ENCODE measurements at regions of chr11 and their contacts with region 1.

Region 1: DNA sequence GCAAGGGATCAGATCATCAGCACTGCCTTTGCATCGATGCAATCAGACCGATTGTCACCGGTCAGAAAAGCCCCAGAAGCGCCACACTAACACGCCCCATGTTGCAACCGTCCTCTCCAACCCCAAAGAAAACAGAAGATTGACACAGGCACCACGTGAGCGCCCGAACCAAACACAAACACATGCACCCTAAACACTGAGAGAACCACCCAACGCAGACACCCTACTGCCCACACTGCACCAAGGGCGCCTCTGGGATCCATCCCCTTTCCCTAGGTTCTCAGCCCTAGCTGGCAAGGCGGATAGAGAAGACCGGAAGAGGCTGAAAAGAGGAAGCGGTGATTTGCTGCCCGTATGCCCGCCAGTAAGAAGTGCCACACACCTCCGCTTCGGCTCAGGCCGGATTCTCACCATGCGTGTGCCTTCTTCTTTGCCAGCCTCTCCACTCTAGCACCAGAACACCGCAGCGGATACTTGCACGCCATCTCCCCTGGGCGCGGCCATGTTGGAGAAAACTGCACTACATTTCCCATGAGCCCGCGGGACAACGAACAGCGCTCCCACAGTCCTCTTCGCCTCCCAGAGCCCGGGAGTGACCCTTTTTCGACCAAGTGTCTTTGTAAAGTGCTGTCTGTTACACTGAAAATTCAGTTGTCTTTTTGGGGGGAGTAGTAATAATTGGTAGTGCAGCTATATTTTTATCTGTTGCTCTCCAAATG is at the start of gene ALKBH8:
- DNase-seq: peak; percentile 55 to 82 (median 70)
- ATAC-seq: peak; percentile 97 to 99 (median 98)
- H3K4me3 ChIP-seq: peak within 1 kb of the TSS; percentile 61 to 86 (median 76)
- H3K27ac ChIP-seq: peak within 1 kb of the TSS; percentile 8 to 79 (median 46)
- H3K4me1 ChIP-seq: no peaks in the 10 kb centered on the region
- H3K27me3 ChIP-seq: no peaks in the 10 kb centered on the region
- CTCF ChIP-seq: no peak
- total RNA-seq, gene ALKBH8: 2.2 to 3.9 (median 3.1) TPM

Region 2: GRCh38 chr11:107689317-107690202 is 124.2 kb after region 1 on chr11:
- intact Hi-C with region 1: loop called in 1 of 3 experiments (anchors 5 kb)
- DNase-seq: peak in 5 of 6 donors; percentile 49 to 75 (median 62)
- ATAC-seq: peak; percentile 96 to 99 (median 98)
- H3K4me3 ChIP-seq: no peak overlapping the region
- H3K27ac ChIP-seq: no peak overlapping the region
- H3K4me1 ChIP-seq: peaks cover 0 to 2% (median 0%) of the 10 kb centered on the region in 3 donors
- H3K27me3 ChIP-seq: peaks cover 0 to 6% (median 0%) of the 10 kb centered on the region in 4 donors
- CTCF ChIP-seq: peak in 3 of 4 donors; percentile 43 to 60 (median 47)

Region 3: GRCh38 chr11:107705027-107705426 is 139.6 kb after region 1 on chr11:
- intact Hi-C with region 1: no loop called
- DNase-seq: no peak
- ATAC-seq: no peak
- H3K4me3 ChIP-seq: no peak overlapping the region
- H3K27ac ChIP-seq: no peak overlapping the region
- H3K4me1 ChIP-seq: no peaks in the 10 kb centered on the region
- H3K27me3 ChIP-seq: no peaks in the 10 kb centered on the region
- CTCF ChIP-seq: no peak